GM10248 (cell line): ENCODE measurements at regions of chr2 and their contacts with region 1.

Region 1: GRCh38 chr2:178946494-178946893 is 103.4 kb downstream of the CCDC141 start:
- DNase-seq: no peak
- CTCF ChIP-seq: no peak

Region 2: DNA sequence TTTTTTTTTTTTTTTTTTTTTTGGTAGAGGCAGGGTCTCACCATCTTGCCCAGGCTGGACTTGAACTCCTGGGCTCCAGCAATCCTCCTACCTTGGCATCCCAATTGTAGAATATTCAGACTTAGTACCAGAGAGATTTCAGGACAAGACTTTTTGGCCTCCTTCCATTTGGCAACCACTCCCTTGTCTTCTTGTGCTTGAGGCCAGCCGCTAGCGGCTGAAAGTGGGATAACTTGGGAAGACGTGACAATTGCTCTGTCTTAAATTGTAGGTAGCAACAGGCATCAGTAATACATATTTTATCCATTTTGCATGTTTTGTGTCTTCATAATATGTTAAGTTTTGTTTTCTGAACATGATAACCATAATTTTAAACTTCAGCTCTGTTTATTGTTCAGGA is 85.9 kb before region 1 on chr2:
- CTCF ChIA-PET with region 1: no interaction called
- POLR2A ChIA-PET with region 1: no interaction called
- DNase-seq: no peak
- CTCF ChIP-seq: no peak

Region 3: DNA sequence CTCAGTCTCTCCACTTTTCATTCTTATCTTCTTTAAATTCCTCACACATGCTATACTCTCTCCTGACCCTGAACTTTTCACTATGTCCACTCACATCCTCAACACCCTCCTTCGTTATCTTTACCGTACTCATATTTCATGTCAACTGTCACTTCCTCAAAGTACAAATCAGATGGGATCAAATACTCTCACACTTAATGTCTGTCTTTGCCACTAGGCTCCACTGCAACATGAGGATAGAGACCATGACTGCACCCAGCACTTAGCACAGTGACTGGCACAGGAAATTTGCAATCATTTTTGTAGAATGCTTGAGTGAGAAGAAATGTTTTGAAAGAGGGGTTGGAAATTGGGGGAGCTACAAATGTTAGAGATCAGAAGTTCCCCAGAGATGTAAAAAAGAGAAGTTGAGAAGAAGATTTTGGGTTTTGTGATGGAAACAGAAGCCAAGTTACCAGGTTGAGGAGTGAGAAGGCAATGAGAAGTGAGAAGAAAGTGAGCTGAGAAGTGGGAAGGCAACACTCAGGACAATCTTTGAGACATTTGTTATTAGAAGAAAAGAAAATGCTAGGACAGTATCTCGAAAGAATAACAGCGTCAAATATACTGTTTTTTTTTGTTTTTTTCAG is 16.4 kb after region 1 on chr2:
- CTCF ChIA-PET with region 1: interaction called, 11 read pairs
- POLR2A ChIA-PET with region 1: no interaction called
- DNase-seq: no peak
- CTCF ChIP-seq: no peak

Region 4: GRCh38 chr2:178990533-178991241 is 44.2 kb after region 1 on chr2:
- CTCF ChIA-PET with region 1: no interaction called
- POLR2A ChIA-PET with region 1: no interaction called
- DNase-seq: peak; percentile 15
- CTCF ChIP-seq: no peak